GM12878 (cell line): ENCODE measurements at regions of chr20 and their contacts with region 1.

Region 1: GRCh38 chr20:49685809-49686208 is 27.9 kb downstream of the B4GALT5 start:
- DNase-seq: no peak
- ATAC-seq: no peak
- H3K4me3 ChIP-seq: 0 out of 2 replicates have a peak overlapping the region, but pooled peaks have one; percentile 6
- H3K27ac ChIP-seq: no peak overlapping the region
- H3K4me1 ChIP-seq: peaks cover 38% of the 10 kb centered on the region
- H3K27me3 ChIP-seq: no peaks in the 10 kb centered on the region
- CTCF ChIP-seq: no peak
- EP300 ChIP-seq: no peak
- POLR2A ChIP-seq: no peak
- RAD21 ChIP-seq: no peak

Region 2: GRCh38 chr20:49699200-49699992 is 13.6 kb after region 1 on chr20:
- CTCF ChIA-PET with region 1: interaction called, 4 read pairs
- POLR2A ChIA-PET with region 1: interaction called, 11 read pairs
- RAD21 ChIA-PET with region 1: interaction called, 22 read pairs
- SMC1A ChIA-PET with region 1: interaction called, 60 read pairs
- in situ Hi-C with region 1: no loop called
- intact Hi-C with region 1: no loop called
- DNase-seq: no peak
- ATAC-seq: peak; percentile 90
- H3K4me3 ChIP-seq: peak overlapping the region; percentile 40
- H3K27ac ChIP-seq: peak overlapping the region; percentile 73
- H3K4me1 ChIP-seq: peaks cover 59% of the 10 kb centered on the region
- H3K27me3 ChIP-seq: no peaks in the 10 kb centered on the region
- CTCF ChIP-seq: no peak
- EP300 ChIP-seq: peak; percentile 53 to 75; a peak in 1 of 4 replicates
- POLR2A ChIP-seq: no peak
- RAD21 ChIP-seq: no peak